Activated naive CD4-positive, alpha-beta T cell treated with anti-CD3 and anti-CD28 coated beads for 36 hours (primary cell): ENCODE measurements at regions of chr20 and their contacts with region 1.

Region 1: DNA sequence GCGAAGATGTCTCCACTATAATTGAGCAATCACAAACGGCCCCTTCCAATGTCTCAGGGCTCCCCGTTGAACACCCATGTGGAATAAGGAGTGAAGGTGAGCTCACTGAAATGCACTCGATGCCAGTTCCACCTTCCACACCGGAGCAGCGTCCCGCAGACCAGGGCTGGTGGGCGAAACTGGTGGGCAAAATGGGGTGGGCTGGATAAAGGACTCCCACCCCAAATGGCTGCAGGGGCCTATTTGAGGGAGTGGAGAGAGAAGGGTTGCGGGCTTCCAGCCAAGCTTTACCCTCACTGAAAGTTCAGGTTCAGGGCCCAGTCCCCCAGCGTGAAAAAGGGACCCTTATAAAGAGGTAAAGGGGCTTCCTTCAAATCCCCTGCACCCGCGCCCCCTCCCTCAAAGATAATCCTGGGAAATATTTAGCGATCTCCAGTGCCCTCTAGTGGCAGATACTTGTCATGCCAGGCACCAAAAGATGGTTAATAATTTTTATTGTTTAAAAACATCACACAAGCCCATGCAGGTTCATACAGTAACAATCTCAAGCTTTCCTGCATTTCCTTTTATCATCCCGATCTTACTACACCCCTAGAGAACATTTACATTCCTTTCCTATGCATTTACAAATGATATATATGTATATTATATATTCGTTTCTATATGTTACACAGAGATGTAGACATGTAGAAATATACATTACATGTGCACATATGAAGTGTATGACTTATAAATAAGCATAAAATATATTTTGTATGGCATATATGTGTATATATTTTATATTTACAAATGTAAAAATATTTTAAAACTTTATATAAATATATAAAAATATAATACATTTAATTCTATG is 58.2 kb upstream of the NKX2-2 start:
- DNase-seq: peak; percentile 26
- H3K4me3 Mint-ChIP-seq: no peak overlapping the region
- H3K27ac Mint-ChIP-seq: no peak overlapping the region
- H3K4me1 Mint-ChIP-seq: peaks cover 7% of the 10 kb centered on the region
- H3K27me3 Mint-ChIP-seq: peaks cover 7% of the 10 kb centered on the region

Region 2: DNA sequence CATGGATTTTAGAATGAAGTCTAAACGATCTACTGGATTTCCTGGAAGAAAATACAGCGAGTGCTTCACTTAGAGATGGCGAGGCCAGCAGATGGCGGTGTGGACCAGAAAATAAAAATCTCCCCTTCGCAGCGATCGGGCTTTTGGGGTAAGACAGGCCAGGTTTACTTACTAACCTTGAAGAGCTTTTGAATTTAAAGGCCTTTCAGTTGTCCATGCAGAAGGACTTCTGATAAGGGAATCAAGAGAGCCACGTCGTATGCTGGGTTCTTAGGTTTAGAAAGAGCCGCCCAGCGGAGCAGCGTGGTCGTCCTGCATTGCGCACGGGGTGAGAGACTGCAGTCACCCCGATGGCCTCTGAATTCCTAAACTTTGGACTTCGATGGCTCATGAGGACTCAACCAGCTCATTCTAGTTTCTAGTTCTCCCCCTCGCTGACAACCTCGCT is 734.5 kb before region 1 on chr20:
- CTCF ChIA-PET with region 1: interaction called, 3 read pairs
- intact Hi-C with region 1: loop called (anchors 2 kb)
- DNase-seq: peak; percentile 67
- H3K4me3 Mint-ChIP-seq: no peak overlapping the region
- H3K27ac Mint-ChIP-seq: no peak overlapping the region
- H3K4me1 Mint-ChIP-seq: peaks cover 3% of the 10 kb centered on the region
- H3K27me3 Mint-ChIP-seq: peaks cover 7% of the 10 kb centered on the region

Region 3: DNA sequence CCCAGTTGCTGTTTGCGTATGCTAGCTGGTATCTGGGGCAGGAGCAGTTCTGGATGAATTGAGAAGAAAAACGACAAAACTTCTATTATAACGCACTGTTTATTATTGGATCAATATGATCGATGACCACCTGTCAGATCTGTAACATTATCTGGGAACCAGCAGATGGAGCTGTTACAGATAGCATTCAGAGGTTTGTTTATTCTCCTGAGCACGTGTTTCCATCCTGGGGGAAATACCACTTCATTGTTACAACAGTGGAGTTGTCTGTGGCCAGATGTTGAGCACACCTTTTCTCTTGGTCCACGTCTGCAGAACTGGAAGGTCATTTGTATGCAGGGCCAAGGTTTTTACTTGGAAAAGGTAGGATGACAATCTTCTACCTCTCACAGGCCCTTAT is 42.2 kb before region 1 on chr20:
- CTCF ChIA-PET with region 1: interaction called, 45 read pairs
- intact Hi-C with region 1: loop called (anchors 1 kb)
- DNase-seq: no peak
- H3K4me3 Mint-ChIP-seq: no peak overlapping the region
- H3K27ac Mint-ChIP-seq: no peak overlapping the region
- H3K4me1 Mint-ChIP-seq: peaks cover 3% of the 10 kb centered on the region
- H3K27me3 Mint-ChIP-seq: peaks cover 19% of the 10 kb centered on the region

Region 4: DNA sequence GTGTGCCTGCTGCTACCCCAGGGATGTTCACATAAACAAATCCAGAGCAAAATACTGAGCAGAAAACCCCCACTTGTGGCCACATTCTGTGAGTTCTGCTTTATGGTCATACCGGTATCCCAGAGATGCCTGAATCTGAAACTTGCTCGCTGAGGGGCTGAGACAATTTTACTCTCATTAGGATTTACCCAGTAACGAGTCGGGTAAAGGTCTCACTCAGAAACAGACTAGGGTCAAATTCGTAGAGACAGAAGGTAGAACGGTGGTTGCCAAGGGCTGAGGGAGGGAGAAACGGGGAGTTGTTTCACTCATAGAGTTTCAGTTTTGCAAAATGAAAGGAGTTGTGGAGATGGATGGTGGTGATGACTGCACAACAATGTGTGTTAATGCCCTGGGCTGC is 12.8 kb before region 1 on chr20:
- CTCF ChIA-PET with region 1: interaction called, 17 read pairs
- intact Hi-C with region 1: loop called (anchors 2 kb)
- DNase-seq: peak; percentile 22
- H3K4me3 Mint-ChIP-seq: no peak overlapping the region
- H3K27ac Mint-ChIP-seq: no peak overlapping the region
- H3K4me1 Mint-ChIP-seq: peaks cover 36% of the 10 kb centered on the region
- H3K27me3 Mint-ChIP-seq: peaks cover 2% of the 10 kb centered on the region